ENCODE measurements at regions of chr9 and their contacts with region 1.

Region 1: DNA sequence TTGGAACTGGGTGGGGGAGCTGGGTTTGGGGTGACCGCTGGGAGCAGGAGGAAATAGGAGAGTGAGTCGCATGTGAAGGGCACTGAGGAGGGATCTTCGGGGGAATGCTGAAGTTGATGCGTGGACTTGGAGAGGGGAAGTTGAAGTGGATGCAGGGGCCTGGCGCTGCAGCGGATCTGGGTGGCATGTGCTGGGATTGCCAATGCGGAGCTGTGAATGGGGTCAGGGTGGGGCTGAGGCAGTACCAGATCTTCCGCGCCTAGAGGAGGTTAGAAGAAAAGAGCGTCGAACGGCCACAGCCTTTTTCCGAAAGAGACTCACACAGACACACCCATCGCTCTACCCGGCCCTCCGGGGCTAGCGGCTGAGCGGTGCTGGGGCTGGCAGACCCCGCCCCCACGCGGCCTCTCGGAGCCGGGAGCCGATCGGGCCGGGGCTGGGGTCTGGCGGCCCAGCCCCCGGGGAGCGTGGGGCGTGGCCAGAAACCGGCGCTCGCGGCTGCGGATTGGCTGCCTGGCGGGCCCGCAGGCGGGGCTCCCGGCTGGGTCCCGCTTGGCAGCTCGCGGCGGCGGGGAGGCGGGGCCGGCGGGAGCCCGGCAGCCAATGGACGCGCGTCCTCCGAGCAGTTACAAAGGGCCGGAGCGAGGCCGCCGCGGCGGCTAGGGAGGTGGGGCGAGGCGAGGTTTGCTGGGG is at the start of gene TGFBR1:
- DNase-seq: peak; percentile 84 to 94 (median 90)
- ATAC-seq: peak; percentile 84 to 87
- H3K4me3 Mint-ChIP-seq: peak within 1 kb of the TSS; percentile 86 to 97 (median 92)
- H3K27ac Mint-ChIP-seq: peak within 1 kb of the TSS; percentile 87 to 96 (median 94)
- H3K4me1 Mint-ChIP-seq: peaks cover 36 to 60% (median 57%) of the 10 kb centered on the region in 4 donors
- H3K27me3 Mint-ChIP-seq: no peaks in the 10 kb centered on the region
- polyA plus RNA-seq, gene TGFBR1: 19.2 to 23.6 (median 22.3) TPM

Region 2: DNA sequence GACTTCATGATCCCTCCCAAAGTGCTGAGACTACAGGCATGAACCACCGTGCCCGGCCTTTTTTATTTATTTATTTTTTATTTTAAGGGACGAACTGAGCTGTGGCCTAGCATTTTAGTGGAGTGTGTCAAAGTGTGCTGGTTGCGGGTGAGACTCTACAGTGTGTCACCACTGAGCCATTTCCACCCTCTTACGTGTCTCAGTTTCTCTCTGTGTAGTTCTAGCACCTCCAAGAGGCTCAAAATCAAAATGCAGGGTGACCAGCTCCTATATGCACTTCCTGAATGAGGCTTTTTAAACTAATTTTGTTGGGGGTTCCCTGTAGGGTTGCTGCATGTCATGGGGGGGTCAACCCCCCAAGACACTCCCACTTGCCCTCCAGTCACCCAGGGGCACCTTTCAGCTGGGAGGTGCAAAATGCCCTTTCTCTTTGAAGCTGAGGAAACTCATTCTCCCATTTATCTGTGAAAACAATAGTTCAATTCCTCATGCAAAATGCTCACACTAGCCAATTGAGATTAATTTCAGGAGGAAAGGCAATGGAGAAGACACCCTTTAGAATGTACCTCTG is 91.6 kb before region 1 on chr9:
- POLR2A ChIA-PET with region 1: interaction called, 20 read pairs
- DNase-seq: peak in 4 of 10 donors; percentile 5 to 33 (median 18)
- ATAC-seq: peak; percentile 41 to 51
- H3K4me3 Mint-ChIP-seq: peak overlapping the region; percentile 64 to 85 (median 72)
- H3K27ac Mint-ChIP-seq: peak overlapping the region; percentile 36 to 96 (median 92)
- H3K4me1 Mint-ChIP-seq: peaks cover 20 to 37% (median 24%) of the 10 kb centered on the region in 4 donors
- H3K27me3 Mint-ChIP-seq: no peaks in the 10 kb centered on the region

Region 3: GRCh38 chr9:99057665-99058625 is 46.7 kb before region 1 on chr9:
- POLR2A ChIA-PET with region 1: interaction called, 20 read pairs
- DNase-seq: peak; percentile 32 to 92 (median 64)
- ATAC-seq: peak; percentile 89 to 91
- H3K4me3 Mint-ChIP-seq: peak overlapping the region; percentile 76 to 95 (median 88)
- H3K27ac Mint-ChIP-seq: peak overlapping the region; percentile 19 to 91 (median 73)
- H3K4me1 Mint-ChIP-seq: peaks cover 34 to 83% (median 77%) of the 10 kb centered on the region in 4 donors
- H3K27me3 Mint-ChIP-seq: peaks cover 0 to 4% (median 0%) of the 10 kb centered on the region in 5 donors

Region 4: DNA sequence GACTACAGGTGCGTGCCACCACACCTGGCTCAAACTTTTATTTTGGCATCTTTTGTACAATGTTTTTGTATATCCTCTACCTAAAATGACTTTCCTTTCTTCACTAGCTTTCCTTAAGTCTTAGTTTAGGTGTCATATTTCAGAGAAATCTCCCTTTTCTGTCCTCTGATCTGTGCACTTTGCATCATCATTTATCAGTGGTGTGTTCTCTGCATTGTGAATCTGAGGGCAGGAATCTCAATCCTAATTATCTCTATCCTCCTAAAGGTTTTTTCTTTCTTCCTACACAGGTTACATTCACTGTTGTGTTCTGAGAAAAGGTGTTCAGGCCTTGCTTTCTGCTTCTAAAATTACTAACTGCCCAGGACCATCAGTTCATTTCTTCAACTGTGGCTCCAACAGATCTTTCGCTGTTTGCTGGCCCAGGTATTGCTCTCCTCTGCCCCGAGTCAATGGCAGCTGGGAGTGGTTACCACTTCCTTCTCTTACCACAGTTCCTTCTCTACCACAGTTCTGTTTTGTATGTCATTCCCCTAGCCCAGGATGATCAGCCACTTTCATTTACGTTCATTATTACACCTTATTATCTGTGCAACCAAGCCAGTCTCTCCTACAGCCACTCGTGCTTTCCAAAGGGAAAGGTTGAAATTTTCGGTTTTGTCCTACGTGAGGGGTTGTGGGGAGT is 14.3 kb after region 1 on chr9:
- POLR2A ChIA-PET with region 1: interaction called, 63 read pairs
- DNase-seq: peak in 9 of 10 donors; percentile 28 to 81 (median 55)
- ATAC-seq: peak; percentile 98 to 99
- H3K4me3 Mint-ChIP-seq: peak overlapping the region; percentile 68 to 94 (median 85)
- H3K27ac Mint-ChIP-seq: peak overlapping the region; percentile 53 to 95 (median 92)
- H3K4me1 Mint-ChIP-seq: peaks cover 47 to 93% (median 86%) of the 10 kb centered on the region in 4 donors
- H3K27me3 Mint-ChIP-seq: no peaks in the 10 kb centered on the region

Region 5: GRCh38 chr9:99134893-99135341 is 30.3 kb after region 1 on chr9:
- POLR2A ChIA-PET with region 1: interaction called, 53 read pairs
- DNase-seq: peak in 7 of 10 donors; percentile 13 to 65 (median 50)
- ATAC-seq: peak; percentile 64 to 76
- H3K4me3 Mint-ChIP-seq: peak overlapping the region; percentile 44 to 84 (median 71)
- H3K27ac Mint-ChIP-seq: peak overlapping the region; percentile 21 to 97 (median 92)
- H3K4me1 Mint-ChIP-seq: peaks cover 31 to 92% (median 86%) of the 10 kb centered on the region in 4 donors
- H3K27me3 Mint-ChIP-seq: no peaks in the 10 kb centered on the region

Region 6: DNA sequence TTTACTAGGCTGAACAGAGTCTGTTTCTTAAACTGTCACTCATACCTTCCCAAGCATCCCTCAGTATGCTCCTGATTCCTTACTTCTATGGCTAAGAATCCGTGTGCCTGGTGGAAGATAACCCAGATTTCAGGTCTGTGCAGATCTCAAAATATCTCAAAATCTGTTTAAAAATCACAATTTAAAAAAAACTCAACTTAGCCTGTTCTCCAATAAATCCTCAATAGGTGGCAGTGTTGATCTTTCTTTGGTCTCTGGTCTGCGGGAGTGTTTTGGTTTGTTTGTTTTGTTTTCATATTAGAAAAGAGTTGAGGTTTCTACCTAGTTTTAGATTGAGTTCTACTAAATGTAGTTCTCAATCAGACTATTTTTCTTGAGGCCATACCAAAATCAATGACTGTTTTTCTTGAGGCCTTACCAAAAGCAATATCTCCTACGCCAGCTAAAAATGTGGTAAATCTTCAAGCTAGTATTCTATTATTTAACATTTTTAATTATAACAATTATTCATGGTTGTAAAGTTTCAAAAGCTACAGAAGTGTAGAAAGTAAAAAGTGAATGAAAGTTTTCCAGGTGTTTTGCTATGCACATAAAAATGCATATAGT is 58.3 kb after region 1 on chr9:
- POLR2A ChIA-PET with region 1: no interaction called
- DNase-seq: peak in 3 of 10 donors; percentile 59 to 67 (median 64)
- ATAC-seq: peak; percentile 43 to 50
- H3K4me3 Mint-ChIP-seq: no peak overlapping the region
- H3K27ac Mint-ChIP-seq: peak overlapping the region in 3 of 10 donors; percentile 0 to 53 (median 9)
- H3K4me1 Mint-ChIP-seq: peaks cover 22 to 41% (median 31%) of the 10 kb centered on the region in 4 donors
- H3K27me3 Mint-ChIP-seq: peaks cover 0 to 7% (median 5%) of the 10 kb centered on the region in 5 donors

Region 7: GRCh38 chr9:99235926-99236634 is 131.5 kb after region 1 on chr9:
- POLR2A ChIA-PET with region 1: no interaction called
- DNase-seq: peak in 1 of 10 donors; percentile 7
- ATAC-seq: peak; percentile 38 to 65
- H3K4me3 Mint-ChIP-seq: peak overlapping the region in 1 of 10 donors; percentile 29
- H3K27ac Mint-ChIP-seq: peak overlapping the region in 8 of 10 donors; percentile 6 to 79 (median 40)
- H3K4me1 Mint-ChIP-seq: peaks cover 4 to 19% (median 6%) of the 10 kb centered on the region in 4 donors
- H3K27me3 Mint-ChIP-seq: no peaks in the 10 kb centered on the region